Calu3 (cell line): ENCODE measurements at regions of chr1 and their contacts with region 1.

Region 1: GRCh38 chr1:157090196-157090647 is 9.4 kb downstream of the ETV3L start:
- DNase-seq: peak; percentile 94
- H3K4me3 Mint-ChIP-seq: no peak overlapping the region
- H3K27ac Mint-ChIP-seq: no peak overlapping the region
- H3K4me1 Mint-ChIP-seq: peaks cover 12% of the 10 kb centered on the region
- H3K27me3 Mint-ChIP-seq: no peaks in the 10 kb centered on the region
- CTCF ChIP-seq: peak; percentile 95

Region 2: GRCh38 chr1:157147906-157148717 is 57.9 kb after region 1 on chr1:
- CTCF ChIA-PET with region 1: interaction called, 10 read pairs
- intact Hi-C with region 1: no loop called
- DNase-seq: no peak
- H3K4me3 Mint-ChIP-seq: peak overlapping the region; percentile 5
- H3K27ac Mint-ChIP-seq: peak overlapping the region; percentile 75
- H3K4me1 Mint-ChIP-seq: peaks cover 38% of the 10 kb centered on the region
- H3K27me3 Mint-ChIP-seq: no peaks in the 10 kb centered on the region
- CTCF ChIP-seq: no peak

Region 3: DNA sequence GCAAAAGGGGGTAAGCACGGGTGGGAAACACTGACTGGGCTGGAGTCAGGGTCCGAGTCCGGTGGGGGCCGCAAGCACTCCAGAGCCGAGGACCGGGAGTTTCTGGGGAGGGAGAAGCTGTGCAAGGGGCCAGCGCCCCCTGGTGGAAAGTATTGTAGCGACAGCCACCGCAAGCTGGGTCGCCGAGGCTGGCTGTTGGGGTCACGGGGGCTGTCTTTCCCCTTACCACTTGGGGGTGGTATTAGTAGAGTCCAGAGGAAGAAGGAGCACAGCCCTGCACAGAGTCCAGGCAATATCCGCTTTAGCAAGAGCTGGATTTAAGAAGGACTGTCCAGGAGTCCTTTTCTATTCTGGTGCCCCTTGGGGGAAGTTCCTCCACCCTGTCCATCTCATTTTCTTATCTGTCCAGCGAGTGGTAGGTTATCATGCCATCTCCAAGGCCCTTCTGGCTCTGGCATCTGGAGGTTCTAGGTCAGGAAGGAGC is 65.9 kb after region 1 on chr1:
- CTCF ChIA-PET with region 1: interaction called, 268 read pairs
- intact Hi-C with region 1: loop called (anchors 1 kb)
- DNase-seq: peak; percentile 88
- H3K4me3 Mint-ChIP-seq: peak overlapping the region; percentile 40
- H3K27ac Mint-ChIP-seq: no peak overlapping the region
- H3K4me1 Mint-ChIP-seq: peaks cover 48% of the 10 kb centered on the region
- H3K27me3 Mint-ChIP-seq: peaks cover 37% of the 10 kb centered on the region
- CTCF ChIP-seq: peak; percentile 99